ENCODE measurements at regions of chr14 and their contacts with region 1.

Region 1: GRCh38 chr14:77212943-77213678 is 31.5 kb downstream of the TMEM63C start:
- DNase-seq: peak; percentile 65
- H3K4me3 Mint-ChIP-seq: no peak overlapping the region
- H3K27ac Mint-ChIP-seq: no peak overlapping the region
- H3K4me1 Mint-ChIP-seq: no peaks in the 10 kb centered on the region
- H3K27me3 Mint-ChIP-seq: no peaks in the 10 kb centered on the region
- CTCF ChIP-seq: peak; percentile 83

Region 2: DNA sequence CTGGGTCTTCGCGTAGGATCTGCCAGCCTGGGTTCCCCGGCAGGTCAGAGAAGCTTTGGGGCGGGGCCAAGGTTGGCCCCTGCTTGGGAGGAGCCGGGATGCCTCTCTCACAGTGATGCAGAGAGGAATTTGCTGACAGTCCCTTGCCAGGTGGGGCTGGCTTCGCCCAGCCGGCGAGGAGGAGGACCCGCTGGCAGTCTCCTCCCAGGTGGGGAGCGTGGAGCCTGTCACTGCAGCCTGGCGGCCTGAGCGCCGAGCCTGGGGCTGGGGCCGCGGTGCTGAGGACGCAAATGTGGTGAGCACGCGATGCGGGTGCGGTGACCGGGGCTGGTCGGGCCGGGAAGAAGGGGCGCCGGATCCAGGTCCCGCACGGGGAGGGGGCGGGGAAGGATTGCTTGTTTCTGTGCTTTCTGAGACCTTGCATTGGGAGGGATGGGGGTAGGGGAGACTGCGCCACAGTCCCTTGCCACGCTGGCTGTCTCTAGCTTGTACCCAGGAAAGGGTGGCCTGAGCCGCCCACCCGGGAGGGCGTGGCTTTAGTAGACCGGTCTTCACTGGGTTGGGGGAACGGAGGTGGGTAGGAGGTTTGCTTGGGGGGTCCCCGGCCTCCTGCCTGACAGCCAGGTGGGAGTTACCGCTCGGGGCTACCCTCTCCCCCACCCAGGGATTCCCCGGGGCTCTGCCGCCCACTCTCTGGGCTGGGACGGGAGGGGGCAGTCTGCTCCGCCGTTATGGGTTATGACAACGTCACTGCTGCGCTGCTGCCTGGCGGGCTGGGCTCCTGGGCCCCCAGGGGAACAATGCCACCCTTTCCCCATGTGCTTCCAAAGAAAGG is 31.3 kb before region 1 on chr14 and contains the start of gene TMEM63C:
- CTCF ChIA-PET with region 1: interaction called, 44 read pairs
- POLR2A ChIA-PET with region 1: interaction called, 9 read pairs
- intact Hi-C with region 1: no loop called
- DNase-seq: peak; percentile 83
- H3K4me3 Mint-ChIP-seq: peak within 1 kb of the TSS; percentile 76
- H3K27ac Mint-ChIP-seq: no peak within 1 kb of the TSS
- H3K4me1 Mint-ChIP-seq: peaks cover 28% of the 10 kb centered on the region
- H3K27me3 Mint-ChIP-seq: no peaks in the 10 kb centered on the region
- CTCF ChIP-seq: no peak
- total RNA-seq, gene TMEM63C: 5.1 and 9.3 TPM in 2 replicates